MCF 10A (cell line): ENCODE measurements at regions of chr14 and their contacts with region 1.

Region 1: GRCh38 chr14:62126879-62127478 is 364.8 kb downstream of the SNAPC1 start:
- DNase-seq: peak; percentile 69
- H3K4me3 Mint-ChIP-seq: no peak overlapping the region
- H3K27ac Mint-ChIP-seq: no peak overlapping the region
- H3K4me1 Mint-ChIP-seq: no peaks in the 10 kb centered on the region
- H3K27me3 Mint-ChIP-seq: peaks cover 35% of the 10 kb centered on the region
- CTCF ChIP-seq: peak; percentile 69

Region 2: DNA sequence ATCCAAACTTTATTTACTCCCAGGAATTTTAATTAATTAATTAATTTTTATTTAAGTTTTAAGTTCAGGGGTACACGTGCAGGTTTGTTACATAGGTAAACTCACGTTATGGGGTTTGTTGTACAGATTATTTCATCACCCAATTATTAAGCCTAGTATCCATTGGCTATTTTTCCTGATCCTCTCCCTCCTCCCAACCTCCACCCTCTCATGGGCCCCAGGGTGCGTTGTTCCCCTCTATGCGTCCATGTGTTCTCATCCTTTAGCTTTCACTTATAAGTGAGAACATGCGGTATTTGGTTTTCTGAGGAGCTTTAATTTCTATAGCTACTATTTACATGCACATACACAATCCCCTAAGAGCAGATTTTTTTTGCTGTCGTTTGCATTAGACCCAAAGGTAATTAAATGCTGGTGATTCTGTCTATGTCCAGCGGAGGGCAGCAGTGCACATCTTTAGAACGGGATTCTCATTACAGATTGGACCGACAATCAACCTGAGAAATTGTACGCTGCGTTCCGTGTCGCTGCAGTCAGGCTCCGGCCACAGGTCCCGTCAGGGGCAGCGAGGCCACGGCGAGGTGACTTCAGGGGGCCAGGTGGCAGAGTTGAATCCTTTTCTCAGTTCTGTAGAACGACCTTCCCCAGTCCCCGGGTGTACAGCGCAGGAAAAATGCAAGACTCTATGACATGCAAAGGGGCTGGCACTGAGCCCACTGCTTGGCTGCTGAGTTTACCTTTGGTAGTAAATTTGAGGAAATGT is 857.5 kb before region 1 on chr14:
- CTCF ChIA-PET with region 1: no interaction called
- POLR2A ChIA-PET with region 1: no interaction called
- intact Hi-C with region 1: loop called (anchors 5 kb)
- DNase-seq: peak; percentile 90
- H3K4me3 Mint-ChIP-seq: peak overlapping the region; percentile 65
- H3K27ac Mint-ChIP-seq: no peak overlapping the region
- H3K4me1 Mint-ChIP-seq: no peaks in the 10 kb centered on the region
- H3K27me3 Mint-ChIP-seq: peaks cover 39% of the 10 kb centered on the region
- CTCF ChIP-seq: peak; percentile 79

Region 3: GRCh38 chr14:61797309-61797708 is 329.7 kb before region 1 on chr14:
- CTCF ChIA-PET with region 1: no interaction called
- POLR2A ChIA-PET with region 1: no interaction called
- intact Hi-C with region 1: no loop called
- DNase-seq: no peak
- H3K4me3 Mint-ChIP-seq: no peak overlapping the region
- H3K27ac Mint-ChIP-seq: no peak overlapping the region
- H3K4me1 Mint-ChIP-seq: no peaks in the 10 kb centered on the region
- H3K27me3 Mint-ChIP-seq: no peaks in the 10 kb centered on the region
- CTCF ChIP-seq: no peak

Region 4: GRCh38 chr14:61847861-61848260 is 279.1 kb before region 1 on chr14:
- CTCF ChIA-PET with region 1: no interaction called
- POLR2A ChIA-PET with region 1: no interaction called
- intact Hi-C with region 1: no loop called
- DNase-seq: no peak
- H3K4me3 Mint-ChIP-seq: no peak overlapping the region
- H3K27ac Mint-ChIP-seq: no peak overlapping the region
- H3K4me1 Mint-ChIP-seq: no peaks in the 10 kb centered on the region
- H3K27me3 Mint-ChIP-seq: no peaks in the 10 kb centered on the region
- CTCF ChIP-seq: no peak

Region 5: DNA sequence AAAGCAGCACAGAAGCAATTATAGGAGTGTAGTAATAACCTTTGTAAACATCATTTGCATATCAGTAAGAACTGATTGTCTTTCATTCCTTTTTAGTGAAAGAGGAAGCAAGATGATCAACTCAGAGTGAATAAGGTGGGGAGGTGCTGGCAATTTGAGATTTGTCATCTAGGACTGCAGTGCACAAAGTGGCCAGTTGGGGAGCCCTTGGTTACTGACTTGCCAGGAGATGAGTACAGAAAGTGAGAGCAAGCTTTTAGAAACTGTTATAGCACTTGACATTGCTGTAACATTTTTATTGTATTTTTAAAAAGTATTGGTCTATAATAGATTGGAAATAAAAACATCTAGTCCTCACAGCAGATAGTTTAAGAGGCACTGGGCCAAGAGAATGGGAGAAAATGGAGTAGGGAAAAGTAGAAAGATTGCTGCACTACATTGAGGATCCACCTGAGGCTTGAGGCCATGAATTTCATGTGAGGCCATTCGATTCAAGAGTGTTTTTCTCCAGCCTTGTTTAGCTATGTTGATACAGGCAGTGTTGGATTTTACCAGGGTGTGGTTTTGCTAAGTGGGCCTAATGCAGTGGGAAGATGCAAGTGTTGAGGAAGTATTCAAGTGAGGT is 266.6 kb before region 1 on chr14:
- CTCF ChIA-PET with region 1: interaction called, 20 read pairs
- POLR2A ChIA-PET with region 1: no interaction called
- intact Hi-C with region 1: no loop called
- DNase-seq: peak; percentile 60
- H3K4me3 Mint-ChIP-seq: no peak overlapping the region
- H3K27ac Mint-ChIP-seq: no peak overlapping the region
- H3K4me1 Mint-ChIP-seq: no peaks in the 10 kb centered on the region
- H3K27me3 Mint-ChIP-seq: peaks cover 27% of the 10 kb centered on the region
- CTCF ChIP-seq: peak; percentile 68

Region 6: GRCh38 chr14:61894452-61895077 is 232.4 kb before region 1 on chr14:
- CTCF ChIA-PET with region 1: interaction called, 110 read pairs
- POLR2A ChIA-PET with region 1: no interaction called
- intact Hi-C with region 1: loop called (anchors 1 kb)
- DNase-seq: peak; percentile 81
- H3K4me3 Mint-ChIP-seq: no peak overlapping the region
- H3K27ac Mint-ChIP-seq: no peak overlapping the region
- H3K4me1 Mint-ChIP-seq: peaks cover 8% of the 10 kb centered on the region
- H3K27me3 Mint-ChIP-seq: peaks cover 11% of the 10 kb centered on the region
- CTCF ChIP-seq: peak; percentile 75

Region 7: DNA sequence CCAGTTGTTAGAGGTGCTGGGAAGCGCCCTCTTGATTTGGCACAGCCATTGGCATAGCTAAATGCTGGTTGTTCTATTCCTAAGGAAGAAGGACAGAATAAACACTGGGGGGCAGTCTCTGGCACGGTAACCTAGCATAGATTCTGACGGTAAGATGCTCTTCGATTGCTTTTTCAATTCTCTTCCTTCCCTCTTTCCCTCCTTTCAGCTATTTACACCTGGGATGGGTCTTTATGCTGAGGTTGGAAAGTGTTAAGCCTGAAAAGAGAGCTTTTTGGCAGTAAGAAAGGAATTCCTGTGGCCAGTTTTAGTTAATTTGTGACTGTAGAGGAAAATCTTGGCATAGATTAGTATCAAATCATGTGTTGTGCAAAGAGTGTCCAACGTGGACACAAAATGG is 201.9 kb before region 1 on chr14:
- CTCF ChIA-PET with region 1: interaction called, 36 read pairs
- POLR2A ChIA-PET with region 1: interaction called, 8 read pairs
- intact Hi-C with region 1: loop called (anchors 1 kb)
- DNase-seq: peak; percentile 64
- H3K4me3 Mint-ChIP-seq: no peak overlapping the region
- H3K27ac Mint-ChIP-seq: no peak overlapping the region
- H3K4me1 Mint-ChIP-seq: peaks cover 22% of the 10 kb centered on the region
- H3K27me3 Mint-ChIP-seq: no peaks in the 10 kb centered on the region
- CTCF ChIP-seq: peak; percentile 49

Region 8: DNA sequence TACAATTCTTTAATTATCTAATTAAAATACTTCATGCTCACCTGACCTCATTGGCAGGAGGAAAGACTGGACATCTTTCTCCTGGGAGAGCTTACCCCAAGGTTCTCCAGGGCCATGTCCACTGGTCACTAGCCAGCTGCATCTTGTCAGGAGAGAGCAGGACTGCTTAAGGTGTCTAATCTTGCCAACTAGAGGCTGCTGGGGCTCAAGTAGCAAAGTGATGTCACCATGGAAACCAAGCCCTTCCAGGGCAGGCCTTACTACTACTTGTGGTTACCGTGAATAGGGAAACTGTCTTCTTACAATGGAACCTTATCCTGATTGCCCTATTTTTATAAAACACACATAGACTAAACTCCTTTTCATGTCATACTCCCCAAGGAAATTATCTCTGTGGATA is 11.6 kb after region 1 on chr14:
- CTCF ChIA-PET with region 1: interaction called, 13 read pairs
- POLR2A ChIA-PET with region 1: no interaction called
- intact Hi-C with region 1: no loop called
- DNase-seq: no peak
- H3K4me3 Mint-ChIP-seq: no peak overlapping the region
- H3K27ac Mint-ChIP-seq: no peak overlapping the region
- H3K4me1 Mint-ChIP-seq: peaks cover 5% of the 10 kb centered on the region
- H3K27me3 Mint-ChIP-seq: no peaks in the 10 kb centered on the region
- CTCF ChIP-seq: no peak